ENCODE measurements at regions of chr14 and their contacts with region 1.

Region 1: GRCh38 chr14:35180179-35180578 is 57.8 kb downstream of the PRORP start:
- DNase-seq: no peak
- H3K4me3 ChIP-seq: no peak overlapping the region
- H3K27ac ChIP-seq: no peak overlapping the region
- H3K4me1 ChIP-seq: no peaks in the 10 kb centered on the region
- H3K27me3 ChIP-seq: no peaks in the 10 kb centered on the region
- CTCF ChIP-seq: no peak

Region 2: GRCh38 chr14:35389315-35389667 is 209.1 kb after region 1 on chr14:
- CTCF ChIA-PET with region 1: interaction called, 10 read pairs
- POLR2A ChIA-PET with region 1: no interaction called
- intact Hi-C with region 1: no loop called
- DNase-seq: no peak
- H3K4me3 ChIP-seq: no peak overlapping the region
- H3K27ac ChIP-seq: no peak overlapping the region
- H3K4me1 ChIP-seq: peaks cover 36% of the 10 kb centered on the region
- H3K27me3 ChIP-seq: no peaks in the 10 kb centered on the region
- CTCF ChIP-seq: no peak

Measured in A673 (cell line).